ENCODE measurements at regions of chr4 and their contacts with region 1.

Region 1: DNA sequence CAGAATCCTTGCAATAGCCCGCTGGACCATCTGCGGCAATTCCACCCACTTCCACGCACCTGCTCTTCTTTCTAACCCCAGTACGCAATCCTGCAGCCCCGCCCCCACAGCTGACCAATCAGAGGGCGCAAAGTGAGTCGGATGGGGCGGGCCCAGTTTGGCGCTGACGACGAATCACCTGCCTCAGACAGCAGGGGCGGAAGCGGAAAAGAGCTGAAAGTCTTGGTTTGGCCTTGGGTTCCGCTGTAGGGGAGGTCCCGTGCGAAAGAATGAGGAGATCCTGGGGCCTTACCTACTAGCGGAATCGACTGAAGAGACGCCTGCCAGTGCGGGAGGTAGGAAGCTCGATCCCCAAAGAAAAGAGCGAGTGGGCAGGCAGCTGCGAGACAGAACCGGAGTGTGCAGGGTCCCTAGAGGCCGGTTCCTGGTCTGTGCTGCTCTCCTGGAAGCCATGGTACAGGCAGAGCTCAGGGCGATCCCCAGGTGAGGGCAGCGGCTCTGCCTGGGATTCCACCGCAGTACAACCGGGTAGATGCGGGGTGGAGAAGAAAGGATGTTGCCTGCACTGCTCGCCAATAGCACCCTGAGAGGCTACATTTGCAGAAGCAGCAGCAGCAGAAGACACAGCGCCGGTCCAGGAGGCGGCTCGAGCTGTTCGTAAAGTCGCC is at the start of gene TMEM184C:
- DNase-seq: peak; percentile 92
- ATAC-seq: peak; percentile 99
- H3K4me3 ChIP-seq: peak within 1 kb of the TSS; percentile 82 to 91 (median 85)
- H3K27ac ChIP-seq: peak within 1 kb of the TSS; percentile 83
- H3K4me1 ChIP-seq: peaks cover 30% of the 10 kb centered on the region
- H3K27me3 ChIP-seq: no peaks in the 10 kb centered on the region; a peak in 1 of 5 replicates
- CTCF ChIP-seq: 0 out of 2 replicates have a peak, but pooled peaks have one; percentile 10
- EP300 ChIP-seq: 0 out of 4 replicates have a peak, but pooled peaks of 1 of the 2 experiments have one; percentile 16
- POLR2A ChIP-seq: peak; percentile 86 to 88
- RAD21 ChIP-seq: 0 out of 2 replicates have a peak, but pooled peaks have one; percentile 21
- total RNA-seq, gene TMEM184C: 26.1 and 30.8 TPM in 2 replicates

Region 2: DNA sequence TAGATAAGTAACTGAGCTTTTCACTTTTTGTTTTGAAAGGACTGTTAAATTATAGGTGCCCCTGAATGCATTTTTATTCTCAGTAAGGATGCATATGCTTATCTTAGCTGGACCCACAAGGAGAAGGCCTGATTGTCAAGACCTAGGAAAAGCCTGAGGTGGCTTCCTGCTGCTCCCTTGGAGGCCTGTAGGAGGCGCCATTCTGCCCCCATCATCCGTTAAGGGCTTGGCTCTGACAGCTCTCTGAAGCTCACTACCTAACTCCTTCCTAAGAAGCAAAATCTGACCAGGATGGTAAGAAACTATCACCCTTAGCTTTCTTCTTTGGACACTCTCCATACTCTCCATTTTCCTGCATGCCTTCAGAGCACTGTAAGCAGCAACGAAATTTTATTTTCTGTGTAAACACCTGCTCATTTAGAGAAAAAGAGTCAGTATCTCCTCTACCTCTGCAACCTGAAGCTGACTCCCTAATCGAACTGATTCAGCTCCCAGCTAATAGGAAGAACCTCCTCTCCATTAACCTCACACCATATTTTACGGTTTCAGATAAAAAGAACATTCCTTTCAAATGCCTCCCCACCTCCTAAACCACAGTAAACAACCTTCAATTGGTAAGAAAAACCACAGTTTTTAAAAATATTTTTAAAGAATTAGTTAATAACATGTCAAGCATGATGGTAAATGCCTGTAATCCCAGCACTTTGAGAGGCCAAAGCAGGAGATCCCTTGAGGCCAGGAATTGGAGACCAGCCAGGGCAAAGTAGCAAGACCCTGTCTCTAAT is 209.9 kb before region 1 on chr4:
- CTCF ChIA-PET with region 1: no interaction called
- POLR2A ChIA-PET with region 1: no interaction called
- in situ Hi-C with region 1: no loop called
- intact Hi-C with region 1: no loop called
- DNase-seq: no peak
- ATAC-seq: no peak
- H3K4me3 ChIP-seq: no peak overlapping the region
- H3K27ac ChIP-seq: no peak overlapping the region
- H3K4me1 ChIP-seq: no peaks in the 10 kb centered on the region
- H3K27me3 ChIP-seq: no peaks in the 10 kb centered on the region
- CTCF ChIP-seq: peak; percentile 31
- EP300 ChIP-seq: no peak
- POLR2A ChIP-seq: no peak
- RAD21 ChIP-seq: no peak

Region 3: GRCh38 chr4:147530723-147531122 is 86.6 kb before region 1 on chr4:
- CTCF ChIA-PET with region 1: no interaction called
- POLR2A ChIA-PET with region 1: no interaction called
- in situ Hi-C with region 1: no loop called
- intact Hi-C with region 1: no loop called
- DNase-seq: no peak
- ATAC-seq: no peak
- H3K4me3 ChIP-seq: no peak overlapping the region
- H3K27ac ChIP-seq: no peak overlapping the region
- H3K4me1 ChIP-seq: no peaks in the 10 kb centered on the region
- H3K27me3 ChIP-seq: no peaks in the 10 kb centered on the region
- CTCF ChIP-seq: no peak
- EP300 ChIP-seq: no peak
- POLR2A ChIP-seq: no peak
- RAD21 ChIP-seq: no peak

Region 4: GRCh38 chr4:147683717-147684700 is 66.7 kb after region 1 on chr4 and contains the start of gene PRMT9:
- CTCF ChIA-PET with region 1: no interaction called
- POLR2A ChIA-PET with region 1: interaction called, 29 read pairs
- in situ Hi-C with region 1: no loop called
- intact Hi-C with region 1: loop called (anchors 5 kb)
- DNase-seq: peak; percentile 81
- ATAC-seq: peak; percentile 99
- H3K4me3 ChIP-seq: peak within 1 kb of the TSS; percentile 63 to 91 (median 66)
- H3K27ac ChIP-seq: peak within 1 kb of the TSS; percentile 79
- H3K4me1 ChIP-seq: peaks cover 11% of the 10 kb centered on the region
- H3K27me3 ChIP-seq: no peaks in the 10 kb centered on the region; a peak in 1 of 5 replicates
- CTCF ChIP-seq: no peak
- EP300 ChIP-seq: no peak
- POLR2A ChIP-seq: peak; percentile 84 to 95
- RAD21 ChIP-seq: peak; percentile 14; the same call in 1 of the 2 replicates
- total RNA-seq, gene PRMT9: 9.7 and 10.4 TPM in 2 replicates

Region 5: GRCh38 chr4:147731580-147732517 is 114.5 kb after region 1 on chr4 and contains the start of gene ARHGAP10:
- CTCF ChIA-PET with region 1: no interaction called
- POLR2A ChIA-PET with region 1: interaction called, 3 read pairs
- in situ Hi-C with region 1: no loop called
- intact Hi-C with region 1: loop called (anchors 5 kb)
- DNase-seq: no peak
- ATAC-seq: peak; percentile 87
- H3K4me3 ChIP-seq: peak within 1 kb of the TSS; percentile 56 to 77 (median 66)
- H3K27ac ChIP-seq: no peak within 1 kb of the TSS
- H3K4me1 ChIP-seq: peaks cover 32% of the 10 kb centered on the region
- H3K27me3 ChIP-seq: peaks cover 2 to 41% of the 10 kb centered on the region in 2 experiments; a peak in 4 of 5 replicates
- CTCF ChIP-seq: no peak
- EP300 ChIP-seq: no peak
- POLR2A ChIP-seq: no peak
- RAD21 ChIP-seq: no peak
- total RNA-seq, gene ARHGAP10: 1.6 TPM in 2 replicates

Measured in HepG2 (cell line).